Naive thymus-derived CD4-positive, alpha-beta T cell (primary cell): ENCODE measurements at regions of chr3 and their contacts with region 1.

Region 1: GRCh38 chr3:128051837-128052594 is at the start of gene SEC61A1:
- DNase-seq: peak; percentile 94 to 97 (median 95)
- ATAC-seq: peak; percentile 97
- H3K4me3 ChIP-seq: peak within 1 kb of the TSS; percentile 82
- H3K4me3 Mint-ChIP-seq: peak within 1 kb of the TSS; percentile 90 to 98 (median 96)
- H3K27ac ChIP-seq: peak within 1 kb of the TSS; percentile 95
- H3K27ac Mint-ChIP-seq: peak within 1 kb of the TSS; percentile 87 to 99 (median 97)
- H3K4me1 ChIP-seq: peaks cover 28 to 37% of the 10 kb centered on the region in 2 donors
- H3K4me1 Mint-ChIP-seq: peaks cover 36 to 44% (median 43%) of the 10 kb centered on the region in 7 donors
- H3K27me3 ChIP-seq: no peaks in the 10 kb centered on the region
- H3K27me3 Mint-ChIP-seq: peaks cover 0 to 17% (median 1%) of the 10 kb centered on the region in 5 donors
- total RNA-seq, gene SEC61A1: 110 to 219 (median 132) TPM

Region 2: DNA sequence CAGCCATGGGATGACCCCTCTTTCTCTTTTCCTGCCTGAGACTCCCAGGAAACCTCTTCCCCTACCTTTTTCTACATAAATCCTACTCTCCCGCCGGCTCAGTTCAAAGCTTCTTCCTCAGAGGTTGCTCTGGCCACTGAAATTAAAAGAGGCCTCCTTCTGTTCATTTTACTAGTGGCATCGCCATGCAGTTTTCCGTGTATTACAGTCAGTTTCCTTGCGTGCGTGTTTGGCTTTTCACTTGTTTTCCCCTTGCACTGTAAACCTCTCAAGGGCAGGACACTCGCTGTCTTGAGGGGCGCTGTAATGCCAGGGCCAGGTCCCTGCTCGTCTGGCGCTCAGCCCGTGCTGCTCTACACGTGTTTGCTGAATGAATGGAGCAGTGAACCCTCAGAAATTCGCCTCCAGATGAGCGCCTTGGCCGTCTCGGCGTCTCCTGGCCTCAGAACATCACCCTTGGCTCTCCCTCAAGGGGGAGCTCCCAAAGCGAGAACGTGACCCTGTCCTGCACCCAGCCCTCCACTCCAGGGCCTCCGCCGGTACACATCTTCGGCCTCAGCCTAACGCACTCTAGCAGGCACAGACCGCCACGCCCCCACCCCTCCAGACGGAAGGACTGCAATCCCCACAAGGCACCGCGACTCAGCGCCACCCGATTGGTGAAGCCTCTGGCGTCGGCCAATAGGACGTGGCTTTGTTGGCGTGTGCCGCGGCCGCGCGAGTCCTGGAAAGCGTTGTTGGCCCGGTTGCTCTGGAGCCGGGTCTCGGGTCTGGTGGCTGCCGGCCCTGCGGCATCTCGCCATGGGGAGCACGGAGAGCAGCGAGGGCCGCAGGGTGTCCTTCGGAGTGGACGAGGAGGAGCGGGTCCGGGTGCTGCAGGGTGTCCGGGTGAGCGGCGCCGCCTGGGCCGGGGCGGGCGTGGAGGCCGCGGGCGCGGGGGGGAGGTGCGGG is 1348.2 kb before region 1 on chr3 and contains the start of gene CHCHD6:
- CTCF ChIA-PET with region 1: no interaction called
- POLR2A ChIA-PET with region 1: no interaction called
- intact Hi-C with region 1: loop called in 1 of 2 experiments (anchors 10 kb)
- DNase-seq: peak; percentile 92 to 99 (median 96)
- ATAC-seq: peak; percentile 99
- H3K4me3 ChIP-seq: peak within 1 kb of the TSS; percentile 82
- H3K4me3 Mint-ChIP-seq: peak within 1 kb of the TSS; percentile 83 to 99 (median 97)
- H3K27ac ChIP-seq: peak within 1 kb of the TSS; percentile 69
- H3K27ac Mint-ChIP-seq: peak within 1 kb of the TSS; percentile 71 to 98 (median 92)
- H3K4me1 ChIP-seq: peaks cover 6 to 13% of the 10 kb centered on the region in 2 donors
- H3K4me1 Mint-ChIP-seq: peaks cover 17 to 28% (median 21%) of the 10 kb centered on the region in 7 donors
- H3K27me3 ChIP-seq: peaks cover 0 to 5% of the 10 kb centered on the region in 2 donors
- H3K27me3 Mint-ChIP-seq: peaks cover 10 to 42% (median 19%) of the 10 kb centered on the region in 5 donors
- total RNA-seq, gene CHCHD6: 5.4 to 14.0 (median 10.0) TPM

Region 3: GRCh38 chr3:127598841-127599570 is 453.0 kb before region 1 on chr3:
- CTCF ChIA-PET with region 1: no interaction called
- POLR2A ChIA-PET with region 1: no interaction called
- intact Hi-C with region 1: loop called (anchors 1 to 2 kb)
- DNase-seq: no peak
- ATAC-seq: no peak
- H3K4me3 ChIP-seq: peak overlapping the region; percentile 75
- H3K4me3 Mint-ChIP-seq: peak overlapping the region; percentile 62 to 89 (median 82)
- H3K27ac ChIP-seq: peak overlapping the region; percentile 70
- H3K27ac Mint-ChIP-seq: peak overlapping the region; percentile 57 to 93 (median 86)
- H3K4me1 ChIP-seq: peaks cover 7% of the 10 kb centered on the region in 2 donors
- H3K4me1 Mint-ChIP-seq: peaks cover 13 to 57% (median 16%) of the 10 kb centered on the region in 7 donors
- H3K27me3 ChIP-seq: no peaks in the 10 kb centered on the region
- H3K27me3 Mint-ChIP-seq: no peaks in the 10 kb centered on the region

Region 4: DNA sequence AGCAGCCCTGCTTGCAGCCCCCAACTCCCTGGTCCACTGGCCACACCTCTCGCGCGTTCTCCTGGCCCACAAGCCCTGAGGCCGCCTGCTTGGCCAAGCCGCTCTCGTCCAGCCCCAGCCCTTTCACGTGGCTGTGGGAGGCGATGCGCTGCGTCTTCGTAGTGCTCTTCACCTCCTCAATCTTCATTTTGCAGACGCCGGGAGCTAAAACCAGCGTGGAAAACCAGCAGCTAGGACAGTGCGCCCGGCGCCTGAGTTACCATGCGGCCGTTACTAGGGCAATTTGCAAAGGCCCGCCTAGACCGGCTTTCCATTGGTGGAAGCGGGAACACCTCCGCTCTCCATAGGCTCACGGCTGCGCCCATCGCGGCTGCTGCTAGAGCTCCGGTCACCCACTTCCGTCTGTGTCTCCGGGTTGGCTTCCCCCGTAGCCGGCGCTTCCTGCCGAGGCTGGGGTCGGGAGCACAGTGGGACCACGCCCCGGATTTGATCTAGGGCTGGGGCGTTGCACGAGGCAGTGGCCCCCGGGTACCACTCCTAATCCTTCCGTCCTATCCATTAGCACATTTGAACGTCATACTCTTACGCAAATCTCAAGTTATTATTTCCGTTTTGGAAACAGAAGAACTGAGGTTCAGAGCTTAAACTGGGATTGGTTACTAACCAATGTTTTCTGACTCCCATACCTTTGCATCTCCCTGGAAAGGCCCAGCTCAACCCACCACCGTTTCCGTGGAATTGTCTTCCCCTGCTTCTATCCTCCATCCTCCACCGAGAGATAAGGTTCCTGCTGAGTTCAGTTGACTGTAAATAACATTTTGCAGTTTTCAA is 71.7 kb after region 1 on chr3 and contains the start of gene RUVBL1:
- CTCF ChIA-PET with region 1: no interaction called
- POLR2A ChIA-PET with region 1: interaction called, 3 read pairs
- intact Hi-C with region 1: loop called (anchors 1 kb)
- DNase-seq: peak; percentile 85 to 99 (median 98)
- ATAC-seq: peak; percentile 97
- H3K4me3 ChIP-seq: peak within 1 kb of the TSS; percentile 83
- H3K4me3 Mint-ChIP-seq: peak within 1 kb of the TSS; percentile 82 to 100 (median 98)
- H3K27ac ChIP-seq: peak within 1 kb of the TSS; percentile 84
- H3K27ac Mint-ChIP-seq: peak within 1 kb of the TSS; percentile 95 to 99 (median 97)
- H3K4me1 ChIP-seq: peaks cover 13 to 15% of the 10 kb centered on the region in 2 donors
- H3K4me1 Mint-ChIP-seq: peaks cover 23 to 40% (median 27%) of the 10 kb centered on the region in 7 donors
- H3K27me3 ChIP-seq: no peaks in the 10 kb centered on the region
- H3K27me3 Mint-ChIP-seq: peaks cover 0 to under 1% (median 0%) of the 10 kb centered on the region in 5 donors
- total RNA-seq, gene RUVBL1: 16.8 to 59.3 (median 22.5) TPM

Region 5: DNA sequence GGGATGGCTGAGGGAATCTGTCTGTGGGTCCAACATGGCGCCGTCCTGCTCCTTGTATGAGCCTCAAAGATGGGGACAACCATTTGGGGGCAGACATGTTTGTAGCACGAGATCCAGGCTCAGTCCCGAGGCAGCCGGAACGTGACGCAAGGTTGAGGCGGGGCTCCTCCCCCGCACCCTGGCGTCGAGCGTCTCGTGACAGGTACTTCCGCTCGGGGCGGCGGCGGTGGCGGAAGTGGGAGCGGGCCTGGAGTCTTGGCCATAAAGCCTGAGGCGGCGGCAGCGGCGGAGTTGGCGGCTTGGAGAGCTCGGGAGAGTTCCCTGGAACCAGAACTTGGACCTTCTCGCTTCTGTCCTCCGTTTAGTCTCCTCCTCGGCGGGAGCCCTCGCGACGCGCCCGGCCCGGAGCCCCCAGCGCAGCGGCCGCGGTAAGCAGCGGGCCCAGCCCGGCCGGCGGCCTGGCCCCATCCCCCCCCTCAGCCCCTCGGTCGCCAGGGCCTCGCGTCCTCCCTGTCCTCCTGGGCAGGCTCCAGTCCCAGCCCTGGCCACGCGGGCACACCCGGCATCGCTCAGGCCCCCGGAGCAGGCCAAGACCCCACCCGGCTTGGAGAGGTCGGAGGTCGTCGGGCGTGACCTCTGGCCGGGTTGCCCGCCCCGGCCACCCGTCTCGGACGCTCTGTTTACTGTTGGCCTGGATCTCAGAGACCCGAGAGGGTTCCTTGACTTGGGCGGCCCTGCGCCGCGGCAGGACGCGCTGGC is 674.1 kb after region 1 on chr3 and contains the start of gene RAB7A:
- CTCF ChIA-PET with region 1: no interaction called
- POLR2A ChIA-PET with region 1: no interaction called
- intact Hi-C with region 1: loop called in 1 of 2 experiments (anchors 5 kb)
- DNase-seq: peak; percentile 92 to 97 (median 97)
- ATAC-seq: peak; percentile 98
- H3K4me3 ChIP-seq: peak within 1 kb of the TSS; percentile 57
- H3K4me3 Mint-ChIP-seq: peak within 1 kb of the TSS; percentile 89 to 98 (median 96)
- H3K27ac ChIP-seq: peak within 1 kb of the TSS; percentile 100
- H3K27ac Mint-ChIP-seq: peak within 1 kb of the TSS; percentile 92 to 98 (median 95)
- H3K4me1 ChIP-seq: peaks cover 32 to 38% of the 10 kb centered on the region in 2 donors
- H3K4me1 Mint-ChIP-seq: peaks cover 49 to 64% (median 60%) of the 10 kb centered on the region in 7 donors
- H3K27me3 ChIP-seq: no peaks in the 10 kb centered on the region
- H3K27me3 Mint-ChIP-seq: peaks cover 0 to 3% (median 0%) of the 10 kb centered on the region in 5 donors
- total RNA-seq, gene RAB7A: 124 to 249 (median 172) TPM

Region 6: GRCh38 chr3:128736601-128737000 is 684.6 kb after region 1 on chr3:
- CTCF ChIA-PET with region 1: no interaction called
- POLR2A ChIA-PET with region 1: no interaction called
- intact Hi-C with region 1: no loop called
- DNase-seq: no peak
- ATAC-seq: no peak
- H3K4me3 ChIP-seq: no peak overlapping the region
- H3K4me3 Mint-ChIP-seq: no peak overlapping the region
- H3K27ac ChIP-seq: no peak overlapping the region
- H3K27ac Mint-ChIP-seq: peak overlapping the region in 1 of 9 donors; percentile 68
- H3K4me1 ChIP-seq: peaks cover 25 to 45% of the 10 kb centered on the region in 2 donors
- H3K4me1 Mint-ChIP-seq: peaks cover 36 to 77% (median 65%) of the 10 kb centered on the region in 7 donors
- H3K27me3 ChIP-seq: no peaks in the 10 kb centered on the region
- H3K27me3 Mint-ChIP-seq: no peaks in the 10 kb centered on the region

Region 7: GRCh38 chr3:129278439-129278970 is 1226.5 kb after region 1 on chr3 and contains the start of gene HMCES:
- CTCF ChIA-PET with region 1: no interaction called
- POLR2A ChIA-PET with region 1: no interaction called
- intact Hi-C with region 1: loop called in 1 of 2 experiments (anchors 5 kb)
- DNase-seq: peak; percentile 92 to 98 (median 95)
- ATAC-seq: peak; percentile 98
- H3K4me3 ChIP-seq: peak within 1 kb of the TSS; percentile 99
- H3K4me3 Mint-ChIP-seq: peak within 1 kb of the TSS; percentile 95 to 99 (median 98)
- H3K27ac ChIP-seq: peak within 1 kb of the TSS; percentile 99
- H3K27ac Mint-ChIP-seq: peak within 1 kb of the TSS; percentile 89 to 100 (median 98)
- H3K4me1 ChIP-seq: peaks cover 14 to 29% of the 10 kb centered on the region in 2 donors
- H3K4me1 Mint-ChIP-seq: peaks cover 21 to 50% (median 37%) of the 10 kb centered on the region in 7 donors
- H3K27me3 ChIP-seq: no peaks in the 10 kb centered on the region
- H3K27me3 Mint-ChIP-seq: no peaks in the 10 kb centered on the region
- total RNA-seq, gene HMCES: 45.7 to 56.4 (median 52.5) TPM